Activated naive CD4-positive, alpha-beta T cell treated with anti-CD3 and anti-CD28 coated beads for 36 hours (primary cell): ENCODE measurements at regions of chr12 and their contacts with region 1.

Region 1: GRCh38 chr12:48988030-48988649 is 10.0 kb downstream of the WNT1 start:
- DNase-seq: peak; percentile 84
- H3K4me3 Mint-ChIP-seq: no peak overlapping the region
- H3K27ac Mint-ChIP-seq: no peak overlapping the region
- H3K4me1 Mint-ChIP-seq: no peaks in the 10 kb centered on the region
- H3K27me3 Mint-ChIP-seq: peaks cover 22% of the 10 kb centered on the region

Region 2: GRCh38 chr12:48903982-48904411 is 84.1 kb before region 1 on chr12:
- CTCF ChIA-PET with region 1: interaction called, 20 read pairs
- intact Hi-C with region 1: no loop called
- DNase-seq: peak; percentile 92
- H3K4me3 Mint-ChIP-seq: peak overlapping the region; percentile 67
- H3K27ac Mint-ChIP-seq: no peak overlapping the region
- H3K4me1 Mint-ChIP-seq: peaks cover 6% of the 10 kb centered on the region
- H3K27me3 Mint-ChIP-seq: no peaks in the 10 kb centered on the region

Region 3: DNA sequence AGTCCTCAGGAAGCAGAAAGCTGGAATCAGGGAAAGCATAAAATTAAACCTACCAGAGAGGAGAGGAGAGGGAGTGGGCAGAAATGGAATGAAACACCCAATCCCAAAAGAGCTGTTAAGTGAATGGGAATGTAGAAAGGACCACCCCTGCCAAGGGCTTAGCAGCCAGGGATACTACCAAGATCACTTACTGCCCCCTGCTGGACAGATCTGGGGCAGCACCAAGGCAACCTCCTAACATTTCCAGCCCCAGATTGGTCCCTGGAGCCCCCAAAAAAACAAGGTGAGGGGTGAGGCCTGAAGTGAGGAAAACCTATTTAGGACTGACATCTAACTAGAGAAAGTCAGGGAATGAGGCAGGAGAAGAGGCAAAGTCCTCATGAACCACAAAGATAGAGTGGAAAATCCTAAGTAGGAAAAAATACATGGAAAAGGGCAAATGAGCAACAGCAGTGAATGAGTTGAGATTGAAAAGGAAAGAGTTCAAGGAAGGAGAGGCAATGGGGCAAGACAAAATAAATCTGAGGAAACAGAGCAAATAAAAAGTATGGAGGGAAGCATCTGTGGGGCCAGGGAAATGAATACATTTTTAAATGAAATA is 51.7 kb before region 1 on chr12:
- CTCF ChIA-PET with region 1: interaction called, 13 read pairs
- intact Hi-C with region 1: loop called (anchors 1 kb)
- DNase-seq: peak; percentile 90
- H3K4me3 Mint-ChIP-seq: no peak overlapping the region
- H3K27ac Mint-ChIP-seq: peak overlapping the region; percentile 47
- H3K4me1 Mint-ChIP-seq: peaks cover 10% of the 10 kb centered on the region
- H3K27me3 Mint-ChIP-seq: no peaks in the 10 kb centered on the region

Region 4: GRCh38 chr12:48957141-48958048 is 30.7 kb before region 1 on chr12 and contains the start of gene ARF3:
- CTCF ChIA-PET with region 1: interaction called, 19 read pairs
- intact Hi-C with region 1: no loop called
- DNase-seq: peak; percentile 95
- H3K4me3 Mint-ChIP-seq: peak within 1 kb of the TSS; percentile 97
- H3K27ac Mint-ChIP-seq: peak within 1 kb of the TSS; percentile 86
- H3K4me1 Mint-ChIP-seq: peaks cover 29% of the 10 kb centered on the region
- H3K27me3 Mint-ChIP-seq: peaks cover 2% of the 10 kb centered on the region
- total RNA-seq, gene ARF3: 84.4 to 87.3 TPM

Region 5: DNA sequence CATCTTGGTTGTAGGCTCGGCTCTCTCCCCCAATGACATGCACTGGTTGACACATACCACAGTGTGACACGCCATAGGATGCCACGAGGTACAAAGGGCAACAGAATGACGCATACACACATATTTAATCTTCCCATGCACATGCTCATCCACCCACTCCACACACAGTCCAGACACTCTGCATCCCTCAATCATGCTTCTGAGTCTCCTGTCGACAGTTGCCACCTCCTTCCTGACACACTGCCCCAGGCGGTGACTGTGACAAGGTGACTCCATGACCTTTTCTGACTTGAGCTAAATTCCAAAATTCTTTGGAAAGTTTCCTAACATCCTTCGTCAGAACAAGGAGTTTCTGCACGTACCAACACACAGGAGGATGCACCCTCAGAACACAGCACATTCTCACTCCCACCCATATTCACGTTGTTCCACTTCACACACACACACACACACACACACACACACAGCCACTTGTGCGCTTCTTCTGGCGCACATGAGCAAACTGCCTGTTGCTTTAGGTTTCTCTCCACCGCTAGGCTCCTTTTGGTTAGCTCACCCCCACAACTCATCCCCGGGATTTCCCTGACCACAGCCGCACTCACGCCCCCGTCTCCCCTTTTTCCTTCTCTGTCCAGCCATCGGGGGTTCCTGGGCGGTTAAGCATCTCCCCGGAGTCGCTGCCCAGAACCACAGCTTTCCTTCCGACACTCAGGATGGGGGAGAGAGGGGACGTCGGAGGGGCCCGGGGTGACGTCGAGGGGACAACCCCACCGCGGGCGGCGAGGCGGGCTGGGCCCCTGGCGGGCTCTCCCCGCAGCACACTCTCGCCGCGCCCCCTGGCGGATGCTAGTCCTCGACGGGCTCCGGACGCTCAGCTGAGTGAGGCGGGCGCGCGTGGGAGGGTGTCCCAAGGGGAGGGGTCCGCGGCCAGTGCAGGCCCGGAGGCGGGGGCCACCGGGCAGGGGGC is 10.5 kb before region 1 on chr12:
- CTCF ChIA-PET with region 1: interaction called, 223 read pairs
- intact Hi-C with region 1: no loop called
- DNase-seq: peak; percentile 83
- H3K4me3 Mint-ChIP-seq: peak overlapping the region; percentile 19
- H3K27ac Mint-ChIP-seq: no peak overlapping the region
- H3K4me1 Mint-ChIP-seq: peaks cover 44% of the 10 kb centered on the region
- H3K27me3 Mint-ChIP-seq: peaks cover 67% of the 10 kb centered on the region

Region 6: DNA sequence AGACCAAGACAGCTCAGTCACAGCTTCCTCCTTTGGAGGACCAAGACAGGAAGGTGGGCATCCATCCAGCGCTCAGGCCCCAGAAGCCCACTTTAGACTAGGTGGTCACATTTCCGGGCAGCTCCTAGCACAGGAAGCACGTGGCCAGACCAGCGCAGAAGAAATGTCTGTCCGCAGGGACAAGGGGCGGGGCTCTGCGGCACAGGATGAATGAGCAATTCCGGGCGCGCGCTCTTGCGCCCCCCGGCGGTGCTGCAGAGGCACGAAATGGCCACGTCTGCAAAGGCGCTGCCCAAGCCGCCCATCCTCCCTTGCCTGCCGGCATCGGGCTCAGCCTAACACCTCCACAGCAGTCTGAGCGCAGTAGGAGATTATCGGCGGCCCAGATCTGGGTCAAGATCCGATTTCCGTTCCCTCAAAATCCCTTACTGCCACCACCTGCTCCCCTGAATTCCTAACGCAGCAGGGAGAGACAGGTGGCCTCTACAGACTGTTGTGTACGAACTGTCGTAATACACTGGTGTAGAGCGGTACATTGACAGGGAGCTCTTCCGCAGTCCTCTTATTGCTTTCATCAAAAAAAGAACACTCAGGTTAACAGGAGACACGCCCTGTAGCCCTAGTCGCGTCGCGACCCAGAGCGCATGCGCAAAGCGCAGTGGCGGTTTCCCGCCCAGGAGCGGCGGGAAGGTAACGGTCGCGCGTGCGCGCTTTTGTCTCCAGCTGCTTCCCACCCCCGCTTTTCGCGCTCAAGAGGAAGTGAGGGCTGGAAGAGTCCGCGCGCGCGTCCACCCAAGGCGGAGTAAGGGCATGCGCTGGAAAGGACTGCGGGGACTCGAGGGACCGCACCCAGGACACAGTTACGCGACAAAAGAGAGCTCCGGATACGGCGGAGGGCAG is 142.3 kb after region 1 on chr12:
- CTCF ChIA-PET with region 1: no interaction called
- intact Hi-C with region 1: no loop called
- DNase-seq: peak; percentile 96
- H3K4me3 Mint-ChIP-seq: peak overlapping the region; percentile 97
- H3K27ac Mint-ChIP-seq: peak overlapping the region; percentile 100
- H3K4me1 Mint-ChIP-seq: peaks cover 43% of the 10 kb centered on the region
- H3K27me3 Mint-ChIP-seq: no peaks in the 10 kb centered on the region

Region 7: GRCh38 chr12:49893753-49894752 is 905.9 kb after region 1 on chr12:
- CTCF ChIA-PET with region 1: no interaction called
- intact Hi-C with region 1: no loop called
- DNase-seq: no peak
- H3K4me3 Mint-ChIP-seq: no peak overlapping the region
- H3K27ac Mint-ChIP-seq: no peak overlapping the region
- H3K4me1 Mint-ChIP-seq: no peaks in the 10 kb centered on the region
- H3K27me3 Mint-ChIP-seq: no peaks in the 10 kb centered on the region